ENCODE measurements at regions of chr21 and their contacts with region 1.

Region 1: DNA sequence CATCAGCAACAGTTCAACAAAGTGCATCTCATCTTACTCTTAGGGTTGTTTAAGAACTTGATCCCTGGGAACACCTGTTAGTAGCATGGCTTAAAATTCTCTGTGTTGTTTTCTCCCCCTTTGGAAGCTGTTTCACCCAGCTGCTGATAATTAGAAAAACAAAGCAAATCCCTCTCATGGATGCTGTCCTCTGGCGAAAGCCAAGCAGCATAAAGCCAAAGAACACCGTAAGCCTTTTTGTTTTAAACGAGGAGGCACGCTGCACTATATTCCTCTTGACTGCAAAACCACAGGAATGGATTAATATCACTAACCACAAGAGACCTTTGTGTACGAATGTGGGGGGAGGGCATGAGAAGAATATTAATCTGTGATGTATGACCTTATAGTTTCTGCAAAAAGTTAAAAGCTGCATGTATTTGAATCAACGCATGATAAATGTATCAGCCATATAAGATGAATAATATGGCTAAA is 923.2 kb downstream of the LTN1 start:
- DNase-seq: no peak
- ATAC-seq: no peak
- H3K4me3 ChIP-seq: no peak overlapping the region
- H3K27ac ChIP-seq: no peak overlapping the region
- H3K4me1 ChIP-seq: peaks cover 0 to 41% (median 13%) of the 10 kb centered on the region in 12 donors
- H3K27me3 ChIP-seq: no peaks in the 10 kb centered on the region
- CTCF ChIP-seq: no peak
- POLR2A ChIP-seq: no peak

Region 2: DNA sequence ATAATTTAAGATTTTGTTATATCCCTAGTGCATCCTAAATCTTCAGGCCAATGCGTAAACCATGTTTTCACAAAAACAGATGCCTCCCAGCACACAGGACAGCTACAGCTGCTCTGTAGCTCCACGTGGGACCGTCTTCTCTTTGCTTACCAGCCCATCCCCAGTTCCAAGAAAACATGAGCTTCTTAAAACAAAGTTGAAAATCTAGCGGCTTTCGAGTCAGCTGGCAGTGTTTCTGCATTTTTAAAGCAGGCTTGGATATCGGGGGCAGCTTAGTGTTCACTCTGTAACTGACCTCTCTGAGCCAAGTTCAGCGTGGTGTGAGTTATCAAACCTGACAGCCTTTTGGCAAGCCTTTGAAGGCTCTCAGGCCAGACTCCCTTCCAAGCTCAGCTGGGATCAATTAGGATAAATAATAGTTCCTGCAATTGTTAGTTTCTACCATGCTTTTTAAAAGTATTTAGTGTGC is 41.7 kb after region 1 on chr21:
- intact Hi-C with region 1: loop called in 1 of 10 experiments (anchors 10 kb)
- DNase-seq: peak in 4 of 5 donors; percentile 70 to 80 (median 76)
- ATAC-seq: peak; percentile 96 to 100 (median 99)
- H3K4me3 ChIP-seq: peak overlapping the region in 7 of 12 donors; percentile 1 to 32 (median 16)
- H3K27ac ChIP-seq: peak overlapping the region in 10 of 12 donors; percentile 14 to 71 (median 53)
- H3K4me1 ChIP-seq: peaks cover 0 to 14% (median 7%) of the 10 kb centered on the region in 12 donors
- H3K27me3 ChIP-seq: no peaks in the 10 kb centered on the region
- CTCF ChIP-seq: no peak
- POLR2A ChIP-seq: no peak

Region 3: DNA sequence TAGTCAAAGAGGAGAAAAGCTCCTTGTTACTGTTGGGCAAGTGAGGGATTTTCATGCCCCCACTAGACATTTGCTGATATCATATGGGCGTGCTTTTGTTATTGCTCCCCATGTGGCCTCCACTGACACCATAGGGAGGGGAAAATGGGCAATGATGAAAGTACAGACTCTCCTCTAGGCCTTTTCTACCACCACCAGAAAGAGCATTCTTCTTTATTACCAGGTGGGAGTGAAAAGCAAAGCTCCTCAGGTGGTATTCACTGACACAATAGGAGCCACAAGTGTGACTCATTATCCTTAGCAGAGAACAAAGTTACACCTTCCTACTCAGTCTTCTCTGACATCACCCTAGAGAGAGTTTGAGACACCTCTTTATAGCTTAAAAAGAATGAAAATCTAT is 256.1 kb after region 1 on chr21:
- intact Hi-C with region 1: loop called in 2 of 10 experiments (anchors 10 kb)
- DNase-seq: no peak
- ATAC-seq: no peak
- H3K4me3 ChIP-seq: no peak overlapping the region
- H3K27ac ChIP-seq: no peak overlapping the region
- H3K4me1 ChIP-seq: no peaks in the 10 kb centered on the region
- H3K27me3 ChIP-seq: no peaks in the 10 kb centered on the region
- CTCF ChIP-seq: no peak
- POLR2A ChIP-seq: no peak